Heart right ventricle (tissue), 16 donors: ENCODE measurements at regions of chr16 and their contacts with region 1.

Region 1: GRCh38 chr16:66696669-66697630 is at the start of gene CMTM4:
- DNase-seq: peak; percentile 85 to 89
- ATAC-seq: peak; percentile 94 to 99 (median 96)
- H3K4me3 ChIP-seq: peak within 1 kb of the TSS; percentile 56 to 83 (median 72)
- H3K27ac ChIP-seq: peak within 1 kb of the TSS in 9 of 10 donors; percentile 20 to 73 (median 46)
- H3K4me1 ChIP-seq: peaks cover 5 to 44% (median 15%) of the 10 kb centered on the region in 9 donors
- H3K27me3 ChIP-seq: no peaks in the 10 kb centered on the region
- CTCF ChIP-seq: peak in 6 of 9 donors; percentile 19 to 58 (median 38)
- total RNA-seq, gene CMTM4: 7.3 to 14.6 (median 12.1) TPM

Region 2: DNA sequence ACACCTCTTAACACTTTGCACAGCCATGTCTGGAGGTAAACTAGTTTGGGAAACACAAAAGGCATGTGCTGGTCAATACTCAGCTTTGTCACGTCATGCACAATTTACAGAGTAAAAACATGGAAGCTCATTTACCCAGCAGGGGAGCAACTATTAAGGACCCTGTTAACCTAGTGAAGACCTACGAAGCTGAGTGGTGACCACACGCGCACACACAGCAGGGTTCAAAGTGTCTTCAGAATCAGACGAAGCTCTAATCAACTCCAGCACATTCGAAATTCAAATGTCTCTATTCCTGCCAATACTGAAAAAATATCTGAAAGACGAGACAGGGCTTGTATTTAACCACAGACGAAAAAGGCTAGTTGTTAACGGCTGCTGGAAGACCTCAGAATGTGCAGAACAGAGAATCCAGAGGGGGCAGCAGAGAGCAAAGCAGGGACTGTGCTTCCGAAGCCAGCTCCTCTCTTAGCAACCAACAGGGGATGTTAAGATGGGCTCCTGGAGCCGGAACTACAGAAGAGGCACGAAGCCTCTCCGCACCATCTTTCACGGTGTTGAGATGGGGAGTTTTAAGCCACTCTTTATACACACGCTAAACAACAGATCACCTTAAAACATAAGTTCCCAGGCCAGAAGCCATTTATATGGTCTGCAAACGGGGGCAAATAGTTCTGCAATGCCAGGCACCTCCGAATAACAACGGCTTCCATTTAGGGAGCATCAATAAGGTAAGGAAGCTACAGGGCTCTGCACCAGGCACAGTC is 46.1 kb before region 1 on chr16:
- intact Hi-C with region 1: loop called in 1 of 10 experiments (anchors 5 kb)
- DNase-seq: peak; percentile 40 to 85
- ATAC-seq: peak; percentile 82 to 94 (median 92)
- H3K4me3 ChIP-seq: peak overlapping the region in 4 of 10 donors; percentile 16 to 23 (median 20)
- H3K27ac ChIP-seq: no peak overlapping the region
- H3K4me1 ChIP-seq: peaks cover 0 to 43% (median 4%) of the 10 kb centered on the region in 9 donors
- H3K27me3 ChIP-seq: no peaks in the 10 kb centered on the region
- CTCF ChIP-seq: peak; percentile 84 to 95 (median 94)

Region 3: DNA sequence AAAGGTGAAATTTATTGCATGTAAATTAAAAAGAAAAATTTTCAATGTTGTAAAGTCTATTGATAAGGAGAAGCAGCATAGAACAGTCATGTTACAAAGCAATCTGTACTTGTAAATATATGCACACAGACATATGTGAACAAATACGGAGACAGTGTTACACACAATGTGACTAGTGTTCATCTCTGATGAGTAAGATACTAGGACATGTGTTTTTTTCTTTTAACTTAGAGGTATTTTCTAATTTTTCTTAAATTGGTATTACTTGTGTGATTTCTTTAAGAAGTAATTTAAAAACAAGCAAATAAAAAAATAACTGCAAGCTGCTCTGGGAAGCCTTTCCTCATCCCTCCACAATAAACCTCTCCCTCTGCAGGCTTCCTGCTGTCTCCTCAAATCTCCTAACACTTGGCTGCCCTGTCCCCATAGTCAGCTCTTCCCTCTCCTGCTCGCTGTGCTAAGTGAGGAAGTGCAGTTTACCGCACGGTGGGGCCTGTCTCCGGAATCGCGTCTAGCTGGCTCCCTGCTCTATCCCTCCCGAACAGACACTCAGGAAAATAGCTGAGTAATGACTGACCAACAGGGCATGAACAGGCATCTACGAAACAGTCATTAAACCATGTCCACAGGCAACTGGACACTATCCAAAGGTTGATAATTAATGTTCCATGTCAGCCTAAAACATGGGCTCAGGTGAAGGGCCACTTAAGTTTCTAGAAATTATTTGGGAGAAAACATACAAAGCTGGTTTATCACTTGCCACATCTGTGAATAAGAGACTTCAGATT is 36.3 kb before region 1 on chr16:
- intact Hi-C with region 1: loop called in 1 of 10 experiments (anchors 5 kb)
- DNase-seq: peak; percentile 57 to 64
- ATAC-seq: peak; percentile 93 to 97 (median 96)
- H3K4me3 ChIP-seq: no peak overlapping the region
- H3K27ac ChIP-seq: peak overlapping the region; percentile 1 to 79 (median 54)
- H3K4me1 ChIP-seq: peaks cover 8 to 39% (median 29%) of the 10 kb centered on the region in 9 donors
- H3K27me3 ChIP-seq: no peaks in the 10 kb centered on the region
- CTCF ChIP-seq: peak in 5 of 9 donors; percentile 12 to 49 (median 41)